HepG2 (cell line): ENCODE measurements at regions of chrX and their contacts with region 1.

Region 1: GRCh38 chrX:103629318-103630170 is 769 bp downstream of the TCEAL1 start:
- DNase-seq: peak; percentile 39
- ATAC-seq: peak; percentile 94
- H3K4me3 ChIP-seq: peak overlapping the region; percentile 67 to 78 (median 73)
- H3K27ac ChIP-seq: peak overlapping the region; percentile 86
- H3K4me1 ChIP-seq: peaks cover 7% of the 10 kb centered on the region; the same call in 1 of the 2 replicates
- H3K27me3 ChIP-seq: no peaks in the 10 kb centered on the region
- CTCF ChIP-seq: peak; percentile 67
- EP300 ChIP-seq: no peak
- POLR2A ChIP-seq: peak in 1 of 2 experiments; percentile 74; a peak in 2 of 4 replicates
- RAD21 ChIP-seq: no peak

Region 2: DNA sequence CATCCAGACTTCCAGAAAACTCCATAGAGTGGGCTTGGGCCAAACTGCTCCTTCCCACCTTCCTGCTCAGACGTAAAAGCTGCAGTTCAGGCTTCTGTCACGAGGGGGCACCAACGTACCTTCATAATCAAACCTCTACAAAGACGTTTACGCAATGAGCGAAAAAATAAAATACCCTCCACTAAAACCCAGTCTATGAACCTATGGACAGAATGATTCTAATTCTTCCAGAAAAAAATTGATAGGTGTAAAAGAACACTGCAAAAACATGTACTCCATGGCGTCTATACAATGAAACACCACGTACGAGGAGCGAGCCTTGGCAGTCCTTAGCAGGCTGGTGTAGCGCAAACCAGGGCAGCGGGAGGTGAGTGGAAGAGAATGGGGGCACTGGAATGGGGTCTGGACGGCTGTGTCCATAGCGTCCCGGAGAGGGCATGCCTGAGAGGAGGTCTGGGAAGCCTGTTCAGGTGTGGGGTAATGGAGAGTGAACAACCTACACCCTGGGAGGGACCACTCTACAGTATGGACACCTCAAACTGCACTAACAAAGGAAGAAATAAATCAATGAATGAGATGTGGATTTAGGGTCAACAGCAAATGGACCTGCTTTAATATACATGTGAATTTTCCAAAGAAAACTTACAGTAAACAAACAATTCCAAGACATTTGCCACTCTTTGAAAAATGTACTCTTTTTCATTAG is 95.9 kb before region 1 on chrX:
- CTCF ChIA-PET with region 1: interaction called, 4 read pairs
- POLR2A ChIA-PET with region 1: no interaction called
- in situ Hi-C with region 1: no loop called
- intact Hi-C with region 1: loop called (anchors 1 kb)
- DNase-seq: peak; percentile 43
- ATAC-seq: peak; percentile 81
- H3K4me3 ChIP-seq: peak overlapping the region; percentile 2 to 65 (median 49); a peak in 5 of 6 replicates
- H3K27ac ChIP-seq: no peak overlapping the region
- H3K4me1 ChIP-seq: no peaks in the 10 kb centered on the region
- H3K27me3 ChIP-seq: no peaks in the 10 kb centered on the region
- CTCF ChIP-seq: peak; percentile 75
- EP300 ChIP-seq: no peak
- POLR2A ChIP-seq: no peak
- RAD21 ChIP-seq: 0 out of 2 replicates have a peak, but pooled peaks have one; percentile 18

Region 3: GRCh38 chrX:103651151-103651783 is 21.7 kb after region 1 on chrX:
- CTCF ChIA-PET with region 1: no interaction called
- POLR2A ChIA-PET with region 1: no interaction called
- in situ Hi-C with region 1: no loop called
- intact Hi-C with region 1: no loop called
- DNase-seq: no peak
- ATAC-seq: no peak
- H3K4me3 ChIP-seq: no peak overlapping the region
- H3K27ac ChIP-seq: no peak overlapping the region
- H3K4me1 ChIP-seq: no peaks in the 10 kb centered on the region
- H3K27me3 ChIP-seq: no peaks in the 10 kb centered on the region
- CTCF ChIP-seq: no peak
- EP300 ChIP-seq: no peak
- POLR2A ChIP-seq: no peak
- RAD21 ChIP-seq: no peak